Activated CD4-positive, alpha-beta T cell treated with anti-CD3 and anti-CD28 coated beads, Interleukin-2, amount 10 ng/mL, durations not matched to agents 24 days and 14 days (primary cell): ENCODE measurements at regions of chr6 and their contacts with region 1.

Region 1: GRCh38 chr6:158213925-158214674 is 46.0 kb downstream of the GTF2H5 start:
- DNase-seq: peak; percentile 89
- H3K4me3 Mint-ChIP-seq: no peak overlapping the region
- H3K27ac Mint-ChIP-seq: no peak overlapping the region
- H3K4me1 Mint-ChIP-seq: peaks cover 17% of the 10 kb centered on the region
- H3K27me3 Mint-ChIP-seq: no peaks in the 10 kb centered on the region

Region 2: DNA sequence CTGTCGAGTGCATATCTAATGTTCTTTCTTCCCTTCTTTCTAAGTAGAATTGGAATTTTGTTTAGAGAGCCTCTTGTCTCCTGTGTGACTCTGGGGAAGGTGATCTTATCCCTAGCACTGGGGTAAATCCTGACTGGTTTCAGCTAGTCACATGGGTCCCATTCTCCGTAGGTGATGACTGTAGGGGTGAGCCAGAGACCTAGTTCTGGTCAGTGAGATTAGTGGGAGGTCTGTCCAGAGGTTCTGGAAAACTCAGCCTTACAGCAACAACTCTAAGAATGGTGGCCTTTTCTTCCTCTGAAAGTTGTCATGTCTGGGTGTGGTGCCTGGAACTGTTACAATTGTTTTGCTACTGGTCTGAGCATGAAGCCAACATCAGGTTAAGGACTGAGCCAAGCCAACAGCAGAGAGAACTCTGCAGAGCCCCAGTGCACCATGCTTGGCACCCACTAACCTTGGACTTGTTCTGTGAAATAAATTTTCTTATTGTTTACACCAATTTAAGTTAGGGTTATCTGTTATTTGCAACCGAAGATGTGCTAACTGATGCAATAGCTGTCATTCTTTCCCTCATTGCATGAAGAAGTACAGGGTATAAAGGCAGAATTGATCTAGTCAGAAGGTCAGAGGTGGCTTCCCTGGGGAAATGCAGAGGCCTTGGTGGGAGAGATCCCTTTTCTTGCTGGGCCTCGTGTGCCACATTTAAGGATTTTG is 41.3 kb after region 1 on chr6:
- intact Hi-C with region 1: no loop called
- DNase-seq: no peak
- H3K4me3 Mint-ChIP-seq: no peak overlapping the region
- H3K27ac Mint-ChIP-seq: no peak overlapping the region
- H3K4me1 Mint-ChIP-seq: peaks cover 25% of the 10 kb centered on the region
- H3K27me3 Mint-ChIP-seq: no peaks in the 10 kb centered on the region

Region 3: GRCh38 chr6:158605266-158605878 is 391.3 kb after region 1 on chr6:
- intact Hi-C with region 1: loop called (anchors 1 kb)
- DNase-seq: peak; percentile 87
- H3K4me3 Mint-ChIP-seq: no peak overlapping the region
- H3K27ac Mint-ChIP-seq: no peak overlapping the region
- H3K4me1 Mint-ChIP-seq: peaks cover 5% of the 10 kb centered on the region
- H3K27me3 Mint-ChIP-seq: no peaks in the 10 kb centered on the region

Region 4: GRCh38 chr6:158694913-158695312 is 480.8 kb after region 1 on chr6:
- intact Hi-C with region 1: loop called (anchors 5 kb)
- DNase-seq: no peak
- H3K4me3 Mint-ChIP-seq: no peak overlapping the region
- H3K27ac Mint-ChIP-seq: no peak overlapping the region
- H3K4me1 Mint-ChIP-seq: peaks cover 19% of the 10 kb centered on the region
- H3K27me3 Mint-ChIP-seq: no peaks in the 10 kb centered on the region

Region 5: DNA sequence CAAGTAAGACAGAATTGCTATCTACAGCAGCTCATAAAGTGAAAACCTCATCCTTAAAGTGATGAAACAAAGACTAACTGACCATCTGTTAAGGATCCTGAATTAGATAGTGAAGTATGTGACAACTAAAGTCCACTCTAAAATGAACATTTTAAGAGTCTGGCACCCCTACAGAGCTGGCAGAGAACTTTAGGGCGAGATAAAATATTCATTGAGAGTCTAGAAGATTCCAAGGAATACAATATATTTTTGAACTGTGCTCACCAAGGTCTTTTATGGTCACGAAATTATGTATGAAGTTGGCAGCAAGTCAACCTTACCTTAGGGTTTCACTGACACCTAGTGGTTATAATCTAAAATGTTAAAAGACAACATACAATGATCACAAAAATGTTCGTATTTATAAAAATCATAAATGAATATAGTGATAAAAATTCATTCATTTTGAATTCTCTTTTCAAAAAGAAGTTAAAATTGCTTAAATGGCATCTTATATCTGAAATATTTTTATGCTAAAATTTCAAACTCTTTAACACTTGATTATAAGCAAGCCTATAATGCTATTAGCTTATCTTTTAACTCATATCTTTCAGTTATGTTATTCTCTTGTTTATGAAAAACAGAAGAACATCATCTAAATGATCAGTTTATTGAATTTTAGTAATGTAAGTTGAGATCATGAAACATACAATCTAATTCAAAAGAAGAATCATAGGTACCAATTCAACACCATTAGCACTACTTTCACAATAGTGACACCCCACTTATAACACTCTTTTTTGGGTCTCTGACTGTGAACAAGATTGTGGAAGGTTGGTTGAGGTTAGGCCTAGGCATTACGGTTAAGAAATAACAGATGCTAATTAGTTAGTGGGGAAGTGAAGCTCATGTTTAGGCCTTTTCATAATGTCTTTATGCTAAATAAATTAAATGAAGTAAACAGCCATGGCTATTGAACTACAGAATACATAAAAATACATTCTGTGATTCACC is 758.4 kb after region 1 on chr6:
- intact Hi-C with region 1: loop called (anchors 10 kb)
- DNase-seq: peak; percentile 63
- H3K4me3 Mint-ChIP-seq: no peak overlapping the region
- H3K27ac Mint-ChIP-seq: no peak overlapping the region
- H3K4me1 Mint-ChIP-seq: peaks cover 4% of the 10 kb centered on the region
- H3K27me3 Mint-ChIP-seq: peaks cover 2% of the 10 kb centered on the region